PC-9 (cell line): ENCODE measurements at regions of chr2 and their contacts with region 1.

Region 1: GRCh38 chr2:159030674-159031380 is 62.4 kb downstream of the TANC1 start:
- DNase-seq: peak; percentile 47 to 83
- H3K4me3 ChIP-seq: no peak overlapping the region
- H3K27ac ChIP-seq: peak overlapping the region; percentile 73
- H3K4me1 ChIP-seq: peaks cover 32% of the 10 kb centered on the region
- H3K27me3 ChIP-seq: no peaks in the 10 kb centered on the region
- CTCF ChIP-seq: no peak

Region 2: GRCh38 chr2:158931572-158931971 is 99.3 kb before region 1 on chr2:
- CTCF ChIA-PET with region 1: no interaction called
- POLR2A ChIA-PET with region 1: interaction called, 19 read pairs
- intact Hi-C with region 1: no loop called
- DNase-seq: no peak
- H3K4me3 ChIP-seq: no peak overlapping the region
- H3K27ac ChIP-seq: no peak overlapping the region
- H3K4me1 ChIP-seq: peaks cover 22% of the 10 kb centered on the region
- H3K27me3 ChIP-seq: no peaks in the 10 kb centered on the region
- CTCF ChIP-seq: no peak

Region 3: GRCh38 chr2:158990397-158991209 is 40.2 kb before region 1 on chr2:
- CTCF ChIA-PET with region 1: no interaction called
- POLR2A ChIA-PET with region 1: no interaction called
- intact Hi-C with region 1: loop called (anchors 2 kb)
- DNase-seq: peak; percentile 32 to 95
- H3K4me3 ChIP-seq: no peak overlapping the region
- H3K27ac ChIP-seq: peak overlapping the region; percentile 78
- H3K4me1 ChIP-seq: peaks cover 71% of the 10 kb centered on the region
- H3K27me3 ChIP-seq: no peaks in the 10 kb centered on the region
- CTCF ChIP-seq: no peak